GM10248 (cell line): ENCODE measurements at regions of chr3 and their contacts with region 1.

Region 1: DNA sequence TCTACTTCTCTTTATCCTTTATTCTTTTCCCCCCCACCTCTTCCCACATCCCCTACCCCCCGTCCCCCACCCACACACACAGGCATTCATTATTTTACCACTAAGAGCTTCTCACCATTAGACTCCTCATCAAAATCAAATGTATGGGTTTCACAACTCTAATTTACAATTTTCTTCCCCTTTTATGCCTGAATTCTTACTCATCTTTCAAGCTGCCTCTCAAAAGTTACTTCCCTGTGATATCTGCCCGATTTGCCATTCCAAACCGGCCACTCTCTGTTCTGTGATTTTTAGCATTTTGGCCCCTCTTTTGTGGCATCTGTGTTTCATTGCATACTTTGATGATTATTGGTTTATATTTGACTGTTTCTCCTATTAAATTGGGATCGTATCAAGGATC is 42.2 kb downstream of the SLC9A9 start:
- DNase-seq: no peak
- CTCF ChIP-seq: no peak

Region 2: GRCh38 chr3:144415492-144416170 is 609.6 kb after region 1 on chr3:
- CTCF ChIA-PET with region 1: no interaction called
- POLR2A ChIA-PET with region 1: interaction called, 19 read pairs
- DNase-seq: no peak
- CTCF ChIP-seq: no peak